ENCODE measurements at regions of chrX and their contacts with region 1.

Region 1: DNA sequence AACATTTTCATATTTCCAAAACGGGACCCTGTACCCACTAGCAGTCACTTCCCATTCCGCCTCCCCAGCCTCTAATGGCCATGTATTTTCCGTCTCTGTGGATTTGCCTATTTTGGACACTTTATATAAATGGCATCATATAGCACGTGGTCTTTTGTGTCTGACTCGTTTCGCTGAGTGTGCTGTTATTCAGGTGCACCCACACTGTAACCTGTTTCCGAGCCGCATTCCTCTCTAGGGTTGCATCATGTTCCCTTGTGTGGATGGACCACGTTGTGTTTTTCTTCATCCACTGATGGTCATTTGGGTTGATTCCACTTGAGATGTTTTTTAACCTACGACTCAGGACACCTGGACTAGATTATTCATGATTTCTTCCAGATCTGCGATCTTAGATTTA is 85.1 kb upstream of the PRKX start:
- DNase-seq: no peak
- H3K4me3 ChIP-seq: no peak overlapping the region
- H3K27ac ChIP-seq: no peak overlapping the region
- H3K4me1 ChIP-seq: no peaks in the 10 kb centered on the region
- H3K27me3 ChIP-seq: no peaks in the 10 kb centered on the region
- CTCF ChIP-seq: no peak
- EP300 ChIP-seq: no peak
- POLR2A ChIP-seq: no peak

Region 2: GRCh38 chrX:3548765-3549391 is 249.7 kb before region 1 on chrX:
- in situ Hi-C with region 1: no loop called
- intact Hi-C with region 1: no loop called
- DNase-seq: no peak
- H3K4me3 ChIP-seq: no peak overlapping the region
- H3K27ac ChIP-seq: no peak overlapping the region
- H3K4me1 ChIP-seq: no peaks in the 10 kb centered on the region
- H3K27me3 ChIP-seq: no peaks in the 10 kb centered on the region
- CTCF ChIP-seq: no peak
- EP300 ChIP-seq: no peak
- POLR2A ChIP-seq: no peak

Region 3: GRCh38 chrX:3738509-3738908 is 60.0 kb before region 1 on chrX:
- in situ Hi-C with region 1: no loop called
- intact Hi-C with region 1: loop called (anchors 10 kb)
- DNase-seq: no peak
- H3K4me3 ChIP-seq: no peak overlapping the region
- H3K27ac ChIP-seq: no peak overlapping the region
- H3K4me1 ChIP-seq: no peaks in the 10 kb centered on the region
- H3K27me3 ChIP-seq: no peaks in the 10 kb centered on the region
- CTCF ChIP-seq: no peak
- EP300 ChIP-seq: no peak
- POLR2A ChIP-seq: no peak